Sigmoid colon (tissue), 7 donors: ENCODE measurements at regions of chr15 and their contacts with region 1.

Region 1: DNA sequence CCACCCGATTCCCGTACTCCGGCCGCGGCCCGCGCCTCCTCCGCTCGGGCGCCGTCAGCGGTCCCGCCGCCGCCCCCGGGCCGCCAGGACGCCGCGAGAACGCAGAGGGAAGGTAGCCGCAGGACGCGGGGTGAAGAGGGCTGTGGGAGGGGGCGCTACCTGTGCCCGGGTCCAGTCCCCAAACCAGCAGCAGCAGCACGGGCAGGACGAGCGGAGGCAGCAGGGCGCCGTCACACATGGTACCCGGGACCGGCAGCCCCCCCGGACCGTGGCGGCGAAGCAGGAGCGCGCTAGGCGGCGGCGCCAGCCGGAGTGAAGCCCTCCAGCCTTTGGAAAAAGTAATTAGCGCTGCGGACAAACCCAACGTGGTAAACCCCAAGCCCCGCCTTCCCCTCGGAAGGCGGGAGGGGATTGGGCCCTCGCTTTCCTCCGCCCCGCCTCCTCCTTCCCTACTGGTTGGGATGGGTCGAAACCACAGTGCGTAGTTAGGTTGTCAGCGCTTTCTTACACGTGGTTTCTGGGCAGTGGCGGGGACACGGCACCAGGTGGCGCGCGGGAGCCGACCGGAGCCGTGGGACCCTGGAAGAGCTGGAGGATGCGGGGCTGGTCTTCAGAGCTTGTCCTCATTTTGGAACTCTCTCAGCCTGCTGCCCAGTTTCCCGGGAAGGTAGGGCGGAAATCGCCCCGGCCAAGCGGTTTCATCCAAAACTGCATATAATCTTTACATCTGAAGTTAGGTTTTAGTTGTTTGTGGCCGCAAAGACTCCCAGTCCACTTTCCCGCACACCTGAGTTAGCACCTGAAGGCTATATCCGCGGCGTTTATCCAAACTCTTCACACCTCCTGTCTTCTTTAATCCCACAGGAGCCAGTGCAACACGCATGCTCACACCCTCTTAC is at the start of gene ADAMTS17:
- DNase-seq: peak; percentile 98
- H3K4me3 ChIP-seq: peak within 1 kb of the TSS; percentile 51 to 86 (median 78)
- H3K27ac ChIP-seq: peak within 1 kb of the TSS; percentile 69 to 87 (median 80)
- H3K4me1 ChIP-seq: peaks cover 0 to 23% (median 11%) of the 10 kb centered on the region in 4 donors
- H3K27me3 ChIP-seq: peaks cover 5 to 9% (median 8%) of the 10 kb centered on the region in 3 donors
- CTCF ChIP-seq: peak; percentile 88 to 94 (median 92)
- EP300 ChIP-seq: no peak
- POLR2A ChIP-seq: peak; percentile 33 to 73
- total RNA-seq, gene ADAMTS17: 0.71 to 3.6 (median 1.3) TPM

Region 2: DNA sequence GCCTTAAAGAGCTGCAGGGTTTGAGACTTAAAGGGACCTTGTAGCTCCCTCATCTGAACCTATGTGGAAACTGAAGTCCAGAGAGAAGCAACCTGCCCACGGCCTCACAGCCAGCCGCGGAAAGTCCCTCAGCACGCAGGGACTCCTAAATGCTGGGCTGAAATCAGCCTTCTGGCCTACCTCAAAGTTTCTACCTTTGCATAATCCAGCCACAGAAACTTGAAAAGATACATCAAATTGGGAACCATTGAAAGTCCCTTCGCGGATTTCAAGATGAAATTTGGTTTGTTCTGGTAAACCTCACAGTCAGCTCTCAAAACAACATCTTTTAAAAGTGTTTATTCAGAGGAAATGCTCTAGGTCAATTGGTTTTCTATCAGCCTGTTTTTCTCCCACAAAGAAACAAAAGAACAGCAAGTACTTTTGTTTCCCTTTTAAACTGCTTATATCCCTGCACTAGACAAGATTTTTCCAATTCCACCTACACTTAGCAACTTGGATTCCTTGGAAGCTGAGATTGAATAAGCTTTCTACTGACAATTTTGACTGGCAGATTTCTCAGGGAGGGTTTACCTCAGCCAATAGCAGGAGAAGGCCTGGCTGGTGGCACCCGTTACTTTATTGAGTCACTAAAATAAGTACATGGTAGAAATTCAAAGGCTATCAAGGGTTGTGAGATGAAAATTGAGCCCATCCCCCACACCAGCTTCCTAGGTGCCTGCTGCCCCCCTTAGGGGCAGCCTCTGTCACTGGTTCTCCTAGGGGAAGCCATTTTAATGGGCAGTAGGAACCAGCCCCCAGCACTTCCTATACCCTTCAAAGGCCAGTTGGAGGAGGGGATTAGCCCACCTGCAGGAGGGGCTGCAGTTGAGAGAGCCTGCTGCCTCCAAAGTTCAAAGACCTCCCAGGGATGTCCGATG is 171.4 kb before region 1 on chr15:
- intact Hi-C with region 1: loop called (anchors 10 kb)
- DNase-seq: no peak
- H3K4me3 ChIP-seq: no peak overlapping the region
- H3K27ac ChIP-seq: peak overlapping the region in 1 of 4 donors; percentile 41
- H3K4me1 ChIP-seq: peaks cover 2 to 44% (median 37%) of the 10 kb centered on the region in 4 donors
- H3K27me3 ChIP-seq: no peaks in the 10 kb centered on the region
- CTCF ChIP-seq: no peak
- EP300 ChIP-seq: no peak
- POLR2A ChIP-seq: no peak

Region 3: GRCh38 chr15:100526027-100526481 is 184.1 kb after region 1 on chr15:
- intact Hi-C with region 1: loop called (anchors 5 kb)
- DNase-seq: peak; percentile 93
- H3K4me3 ChIP-seq: no peak overlapping the region
- H3K27ac ChIP-seq: peak overlapping the region in 3 of 4 donors; percentile 63 to 76 (median 67)
- H3K4me1 ChIP-seq: peaks cover 0 to 19% (median 12%) of the 10 kb centered on the region in 4 donors
- H3K27me3 ChIP-seq: no peaks in the 10 kb centered on the region
- CTCF ChIP-seq: peak in 1 of 4 experiments; percentile 29
- EP300 ChIP-seq: no peak
- POLR2A ChIP-seq: no peak

Region 4: DNA sequence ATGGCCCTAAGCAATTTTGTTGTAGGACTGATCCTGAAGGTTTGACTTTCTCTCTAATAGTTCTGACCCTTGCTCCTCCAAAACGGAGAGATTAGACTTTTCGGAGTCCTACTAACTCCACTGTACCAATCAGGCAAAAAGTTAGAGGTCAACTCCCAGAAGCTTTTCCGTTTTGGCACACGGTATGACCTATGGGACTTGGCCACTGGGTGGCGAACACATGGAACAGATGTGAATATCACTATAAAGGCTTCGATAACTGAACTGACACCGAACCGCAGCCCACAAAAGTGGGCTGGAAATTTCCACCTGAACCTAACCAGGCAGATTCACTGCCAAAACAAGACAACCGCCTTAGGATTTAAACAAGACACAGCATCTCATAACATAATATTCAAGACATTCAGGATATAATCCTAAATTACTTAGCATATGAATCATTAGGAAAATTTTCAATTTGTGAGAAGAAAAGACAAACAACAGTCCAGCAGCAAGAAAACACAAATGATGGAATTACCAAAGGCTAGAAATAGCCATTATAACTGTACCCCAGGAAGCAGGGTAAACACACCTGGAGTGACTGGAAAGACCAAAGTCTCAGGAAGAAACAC is 1322.5 kb after region 1 on chr15:
- intact Hi-C with region 1: no loop called
- DNase-seq: no peak
- H3K4me3 ChIP-seq: no peak overlapping the region
- H3K27ac ChIP-seq: no peak overlapping the region
- H3K4me1 ChIP-seq: no peaks in the 10 kb centered on the region
- H3K27me3 ChIP-seq: no peaks in the 10 kb centered on the region
- CTCF ChIP-seq: no peak
- EP300 ChIP-seq: no peak
- POLR2A ChIP-seq: no peak